ENCODE measurements at regions of chr5 and their contacts with region 1.

Region 1: GRCh38 chr5:89036704-89037489 is 153.9 kb upstream of the MEF2C start:
- DNase-seq: no peak
- H3K4me3 ChIP-seq: no peak overlapping the region
- H3K27ac ChIP-seq: peak overlapping the region; percentile 51
- H3K4me1 ChIP-seq: peaks cover 15% of the 10 kb centered on the region
- H3K27me3 ChIP-seq: no peaks in the 10 kb centered on the region
- CTCF ChIP-seq: no peak

Region 2: DNA sequence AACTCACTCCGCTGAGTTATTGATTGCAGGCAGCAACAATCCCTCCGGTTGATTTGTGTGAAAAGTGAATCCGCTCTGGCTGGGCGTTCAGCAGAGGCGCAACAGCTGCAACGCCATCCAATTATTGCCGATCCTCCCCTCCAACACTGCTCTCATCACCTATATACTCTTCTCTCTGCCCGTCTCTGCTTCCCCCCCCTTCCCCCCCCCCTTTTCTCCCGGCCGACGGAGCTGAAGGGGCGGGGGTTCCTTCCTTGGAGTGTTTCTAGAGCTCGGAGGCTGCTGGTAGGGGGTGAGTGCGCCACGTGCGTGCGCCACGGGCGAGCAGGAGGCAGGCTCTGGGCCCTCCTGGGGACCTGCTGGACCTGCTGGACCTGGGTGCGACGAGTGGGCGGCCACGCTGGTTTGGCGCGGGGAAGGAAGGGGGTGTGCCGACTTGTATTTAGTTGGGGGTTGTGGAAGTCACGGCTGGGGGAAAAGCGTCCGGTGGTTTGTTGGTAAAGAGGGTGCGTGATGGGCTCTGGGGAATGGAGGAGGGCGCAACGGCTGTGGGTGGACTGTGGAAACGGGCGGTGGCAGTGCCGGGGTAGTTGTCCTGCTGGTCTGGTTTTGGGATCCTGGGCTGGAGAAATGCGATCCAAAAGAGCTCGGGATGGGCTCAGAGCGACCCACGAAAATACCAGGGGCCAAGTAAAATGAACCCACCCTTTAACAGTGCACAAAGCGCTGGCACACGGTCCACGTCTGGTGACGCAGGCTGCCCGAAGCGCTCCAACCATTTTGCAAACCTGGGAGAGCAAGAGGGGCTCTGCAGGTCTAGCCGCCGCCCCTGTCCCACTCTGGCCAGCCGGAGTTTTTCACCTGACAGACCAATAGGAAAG is 147.5 kb before region 1 on chr5:
- intact Hi-C with region 1: loop called (anchors 10 kb)
- DNase-seq: peak; percentile 63
- H3K4me3 ChIP-seq: peak overlapping the region; percentile 79
- H3K27ac ChIP-seq: peak overlapping the region; percentile 94
- H3K4me1 ChIP-seq: peaks cover 55% of the 10 kb centered on the region
- H3K27me3 ChIP-seq: no peaks in the 10 kb centered on the region
- CTCF ChIP-seq: no peak

Region 3: GRCh38 chr5:89147031-89147430 is 110.1 kb after region 1 on chr5:
- intact Hi-C with region 1: no loop called
- DNase-seq: no peak
- H3K4me3 ChIP-seq: no peak overlapping the region
- H3K27ac ChIP-seq: no peak overlapping the region
- H3K4me1 ChIP-seq: no peaks in the 10 kb centered on the region
- H3K27me3 ChIP-seq: no peaks in the 10 kb centered on the region
- CTCF ChIP-seq: no peak

Region 4: GRCh38 chr5:89338935-89339334 is 302.0 kb after region 1 on chr5:
- intact Hi-C with region 1: no loop called
- DNase-seq: no peak
- H3K4me3 ChIP-seq: no peak overlapping the region
- H3K27ac ChIP-seq: no peak overlapping the region
- H3K4me1 ChIP-seq: no peaks in the 10 kb centered on the region
- H3K27me3 ChIP-seq: no peaks in the 10 kb centered on the region
- CTCF ChIP-seq: no peak

Measured in left ventricle myocardium inferior (tissue), 1 donor.